K562 (cell line): ENCODE measurements at regions of chr2 and their contacts with region 1.

Region 1: DNA sequence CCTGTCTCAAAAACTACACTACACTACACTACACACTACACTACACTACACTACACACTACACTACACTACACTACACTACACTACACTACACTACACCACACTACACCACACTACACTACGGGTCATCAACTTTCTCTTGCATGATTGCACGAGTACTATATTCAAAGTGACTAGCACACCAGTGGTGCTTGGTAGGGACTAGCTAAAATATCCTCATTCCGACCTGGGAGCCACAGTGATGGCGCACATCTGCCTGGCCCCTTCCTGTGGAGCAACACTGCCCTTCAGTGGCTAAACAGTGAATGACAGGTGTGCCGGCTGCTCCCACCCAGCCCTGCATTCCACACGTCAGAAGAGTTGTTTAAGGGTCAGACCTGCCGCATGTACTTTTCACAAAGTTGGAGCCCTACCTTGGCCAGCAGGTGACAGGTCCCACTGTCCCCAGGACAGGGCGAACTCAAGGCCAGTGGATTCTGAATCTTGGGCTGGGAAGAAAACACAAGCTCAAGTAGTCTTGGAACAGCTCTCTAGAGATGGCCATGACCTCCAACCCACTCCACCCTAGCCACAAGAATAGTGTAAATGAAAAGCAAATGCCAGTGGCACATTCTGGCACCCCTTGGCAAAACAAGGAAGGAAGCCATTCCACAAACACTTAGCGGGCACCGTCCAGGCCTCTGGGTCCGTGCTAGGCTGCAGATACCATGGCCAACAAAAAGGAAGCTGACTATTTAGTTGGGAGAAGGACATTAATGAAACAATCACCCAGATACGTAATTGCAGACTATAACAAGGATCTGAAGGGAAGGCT is 79.7 kb upstream of the MSH2 start:
- DNase-seq: peak; percentile 82 to 86 (median 84)
- ATAC-seq: peak; percentile 96
- H3K4me3 ChIP-seq: no peak overlapping the region
- H3K27ac ChIP-seq: no peak overlapping the region
- H3K4me1 ChIP-seq: peaks cover 0 to 9% of the 10 kb centered on the region in 2 experiments; a peak in 2 of 5 replicates
- H3K27me3 ChIP-seq: no peaks in the 10 kb centered on the region; a peak in 1 of 5 replicates
- CTCF ChIP-seq: peak; percentile 96 to 98 (median 98)
- EP300 ChIP-seq: no peak
- POLR2A ChIP-seq: no peak
- RAD21 ChIP-seq: peak; percentile 99

Region 2: DNA sequence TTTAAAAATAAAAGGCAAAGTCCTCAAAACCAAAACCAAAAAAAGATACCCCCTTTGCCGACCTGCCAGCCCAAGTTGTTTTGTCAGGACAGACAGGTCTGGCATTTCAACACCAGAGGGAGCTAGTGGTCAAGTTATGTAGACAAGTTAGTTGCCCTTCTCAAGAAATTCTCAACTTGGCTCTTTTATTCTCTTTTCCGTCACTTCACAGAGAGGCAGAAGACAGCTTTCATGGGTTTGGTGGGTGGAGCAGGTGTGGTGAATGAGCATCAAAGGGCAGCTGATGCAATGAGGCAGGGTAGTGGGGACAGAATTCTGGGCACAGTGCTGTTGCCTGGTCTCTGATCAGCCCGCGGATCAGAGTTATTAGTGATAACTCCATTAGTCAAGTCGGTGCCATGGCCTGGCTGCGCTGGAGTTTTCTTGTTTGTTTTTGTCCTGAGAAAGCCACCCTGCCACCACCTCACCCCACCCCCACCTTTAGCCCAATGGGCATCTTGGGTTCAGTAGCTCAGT is 1329.7 kb before region 1 on chr2:
- CTCF ChIA-PET with region 1: no interaction called
- POLR2A ChIA-PET with region 1: no interaction called
- in situ Hi-C with region 1: loop called (anchors 25 kb)
- intact Hi-C with region 1: loop called (anchors 10 kb)
- DNase-seq: peak; percentile 60 to 77 (median 66)
- ATAC-seq: peak; percentile 81
- H3K4me3 ChIP-seq: no peak overlapping the region
- H3K27ac ChIP-seq: no peak overlapping the region
- H3K4me1 ChIP-seq: no peaks in the 10 kb centered on the region
- H3K27me3 ChIP-seq: peaks cover 0 to 20% of the 10 kb centered on the region in 2 experiments; a peak in 2 of 5 replicates
- CTCF ChIP-seq: peak; percentile 62 to 81 (median 76)
- EP300 ChIP-seq: no peak
- POLR2A ChIP-seq: no peak
- RAD21 ChIP-seq: peak; percentile 85 to 87

Region 3: GRCh38 chr2:46803911-46804670 is 519.1 kb before region 1 on chr2:
- CTCF ChIA-PET with region 1: no interaction called
- POLR2A ChIA-PET with region 1: no interaction called
- in situ Hi-C with region 1: no loop called
- intact Hi-C with region 1: loop called (anchors 10 kb)
- DNase-seq: no peak
- ATAC-seq: no peak
- H3K4me3 ChIP-seq: no peak overlapping the region
- H3K27ac ChIP-seq: no peak overlapping the region
- H3K4me1 ChIP-seq: 0 out of 5 replicates have a peak, but pooled peaks cover 0 to 4% of the 10 kb centered on the region in 2 experiments
- H3K27me3 ChIP-seq: peaks cover 16 to 42% of the 10 kb centered on the region in 2 experiments; a peak in 4 of 5 replicates
- CTCF ChIP-seq: no peak
- EP300 ChIP-seq: no peak
- POLR2A ChIP-seq: no peak
- RAD21 ChIP-seq: no peak

Region 4: GRCh38 chr2:46915811-46916630 is 407.2 kb before region 1 on chr2:
- CTCF ChIA-PET with region 1: interaction called, 3 read pairs
- POLR2A ChIA-PET with region 1: interaction called, 3 read pairs
- in situ Hi-C with region 1: loop called (anchors 10 kb)
- intact Hi-C with region 1: loop called (anchors 10 kb)
- DNase-seq: peak; percentile 94 to 98 (median 98)
- ATAC-seq: peak; percentile 82
- H3K4me3 ChIP-seq: peak overlapping the region; percentile 92
- H3K27ac ChIP-seq: peak overlapping the region; percentile 72
- H3K4me1 ChIP-seq: peaks cover 24 to 35% of the 10 kb centered on the region in 2 experiments; a peak in 4 of 5 replicates
- H3K27me3 ChIP-seq: no peaks in the 10 kb centered on the region
- CTCF ChIP-seq: no peak
- EP300 ChIP-seq: peak; percentile 18; the same call in 1 of the 2 replicates
- POLR2A ChIP-seq: peak; percentile 81
- RAD21 ChIP-seq: no peak

Region 5: GRCh38 chr2:47043142-47043890 is 279.9 kb before region 1 on chr2:
- CTCF ChIA-PET with region 1: no interaction called
- POLR2A ChIA-PET with region 1: no interaction called
- in situ Hi-C with region 1: no loop called
- intact Hi-C with region 1: no loop called
- DNase-seq: no peak
- ATAC-seq: no peak
- H3K4me3 ChIP-seq: no peak overlapping the region
- H3K27ac ChIP-seq: no peak overlapping the region
- H3K4me1 ChIP-seq: peaks cover 0 to 6% of the 10 kb centered on the region in 2 experiments; a peak in 4 of 5 replicates
- H3K27me3 ChIP-seq: no peaks in the 10 kb centered on the region
- CTCF ChIP-seq: 0 out of 6 replicates have a peak, but pooled peaks of 1 of the 3 experiments have one; percentile 4
- EP300 ChIP-seq: no peak
- POLR2A ChIP-seq: no peak
- RAD21 ChIP-seq: peak in 1 of 2 experiments; percentile 7; a peak in 1 of 4 replicates

Region 6: DNA sequence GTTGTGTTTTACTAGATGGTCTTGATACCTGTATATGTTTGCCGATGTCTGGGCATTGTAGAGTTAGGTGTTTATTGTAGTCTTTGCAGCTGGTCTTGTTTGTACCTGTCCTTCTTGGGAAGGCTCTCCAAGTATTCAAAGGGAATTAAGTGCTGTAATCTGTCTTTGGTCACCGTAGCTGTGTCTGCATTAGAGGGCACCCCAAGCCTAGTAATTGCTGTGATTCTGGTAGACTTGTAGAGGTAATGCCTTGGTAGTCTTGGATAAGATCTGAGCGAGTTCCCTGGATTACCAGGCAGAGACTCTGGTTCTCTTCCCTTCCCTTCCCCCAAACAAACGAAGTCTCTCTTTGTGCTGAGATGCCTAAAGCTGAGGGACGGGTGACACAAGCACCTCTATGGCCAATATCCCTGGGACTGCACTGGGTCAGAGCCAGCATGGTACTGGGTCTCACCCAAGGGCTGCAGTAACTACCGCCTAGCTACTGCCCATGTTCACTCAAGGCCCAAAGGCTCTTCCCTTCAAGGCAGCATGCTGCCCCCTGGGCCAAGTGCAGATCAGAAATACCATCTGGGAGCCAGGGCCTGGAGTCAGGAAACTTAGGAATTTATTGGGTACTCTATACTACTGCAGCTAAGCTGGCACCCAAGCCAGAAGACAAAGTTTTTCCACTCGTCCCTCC is 195.2 kb before region 1 on chr2:
- CTCF ChIA-PET with region 1: interaction called, 4 read pairs
- POLR2A ChIA-PET with region 1: interaction called, 4 read pairs
- in situ Hi-C with region 1: no loop called
- intact Hi-C with region 1: loop called (anchors 2 kb)
- DNase-seq: no peak
- ATAC-seq: peak; percentile 51; the same call in 1 of the 3 replicates
- H3K4me3 ChIP-seq: no peak overlapping the region
- H3K27ac ChIP-seq: no peak overlapping the region
- H3K4me1 ChIP-seq: no peaks in the 10 kb centered on the region
- H3K27me3 ChIP-seq: peaks cover 9 to 19% of the 10 kb centered on the region in 2 experiments; a peak in 4 of 5 replicates
- CTCF ChIP-seq: peak in 2 of 3 experiments; percentile 4 to 30; a peak in 2 of 6 replicates
- EP300 ChIP-seq: no peak
- POLR2A ChIP-seq: no peak
- RAD21 ChIP-seq: peak in 1 of 2 experiments; percentile 52; a peak in 2 of 4 replicates